PC-3 (cell line): ENCODE measurements at regions of chr12 and their contacts with region 1.

Region 1: GRCh38 chr12:65609359-65609771 is 214.9 kb upstream of the HMGA2 start:
- DNase-seq: peak; percentile 94
- ATAC-seq: peak; percentile 74
- H3K4me3 ChIP-seq: no peak overlapping the region
- H3K27ac ChIP-seq: peak overlapping the region; percentile 96
- H3K4me1 ChIP-seq: peaks cover 74% of the 10 kb centered on the region
- H3K27me3 ChIP-seq: no peaks in the 10 kb centered on the region
- CTCF ChIP-seq: peak; percentile 66

Region 2: GRCh38 chr12:64998371-64999147 is 610.8 kb before region 1 on chr12:
- CTCF ChIA-PET with region 1: no interaction called
- POLR2A ChIA-PET with region 1: no interaction called
- intact Hi-C with region 1: no loop called
- DNase-seq: peak; percentile 93
- ATAC-seq: peak; percentile 90
- H3K4me3 ChIP-seq: no peak overlapping the region
- H3K27ac ChIP-seq: peak overlapping the region; percentile 81
- H3K4me1 ChIP-seq: peaks cover 36% of the 10 kb centered on the region
- H3K27me3 ChIP-seq: no peaks in the 10 kb centered on the region
- CTCF ChIP-seq: no peak

Region 3: GRCh38 chr12:65536876-65537661 is 72.3 kb before region 1 on chr12:
- CTCF ChIA-PET with region 1: no interaction called
- POLR2A ChIA-PET with region 1: interaction called, 11 read pairs
- intact Hi-C with region 1: loop called (anchors 5 kb)
- DNase-seq: peak; percentile 99
- ATAC-seq: peak; percentile 75
- H3K4me3 ChIP-seq: peak overlapping the region; percentile 3; the same call in 1 of the 2 replicates
- H3K27ac ChIP-seq: peak overlapping the region; percentile 89
- H3K4me1 ChIP-seq: peaks cover 58% of the 10 kb centered on the region
- H3K27me3 ChIP-seq: no peaks in the 10 kb centered on the region
- CTCF ChIP-seq: no peak

Region 4: DNA sequence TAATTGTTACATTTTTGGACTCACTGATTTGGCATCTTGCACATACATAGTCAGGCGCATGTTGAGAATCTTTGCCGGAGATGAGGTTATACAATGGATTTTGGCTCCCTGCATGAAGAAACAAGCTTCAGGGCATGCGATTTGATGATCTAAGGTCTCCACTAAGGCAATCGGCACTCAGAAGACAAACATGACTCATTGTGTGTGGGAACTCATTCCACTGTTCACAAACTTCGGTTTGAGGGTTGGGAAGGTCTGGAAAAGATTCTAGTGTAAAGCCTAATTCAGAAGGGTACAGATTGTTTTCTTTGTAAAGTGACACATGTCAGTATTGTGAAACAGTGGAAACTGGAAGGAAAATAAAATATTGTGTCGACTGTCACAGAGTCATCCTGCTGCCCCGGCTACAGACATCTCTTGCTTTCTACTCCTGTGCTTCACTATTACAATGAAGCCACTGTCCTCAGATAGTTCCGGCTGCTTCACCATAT is 22.3 kb after region 1 on chr12:
- CTCF ChIA-PET with region 1: interaction called, 10 read pairs
- POLR2A ChIA-PET with region 1: interaction called, 7 read pairs
- intact Hi-C with region 1: loop called (anchors 1 kb)
- DNase-seq: peak; percentile 99
- ATAC-seq: peak; percentile 49
- H3K4me3 ChIP-seq: no peak overlapping the region; the same call in 1 of the 2 replicates
- H3K27ac ChIP-seq: peak overlapping the region; percentile 99
- H3K4me1 ChIP-seq: peaks cover 65% of the 10 kb centered on the region
- H3K27me3 ChIP-seq: no peaks in the 10 kb centered on the region
- CTCF ChIP-seq: no peak

Region 5: GRCh38 chr12:65649126-65649525 is 39.8 kb after region 1 on chr12:
- CTCF ChIA-PET with region 1: no interaction called
- POLR2A ChIA-PET with region 1: interaction called, 19 read pairs
- intact Hi-C with region 1: loop called (anchors 1 kb)
- DNase-seq: peak; percentile 99
- ATAC-seq: peak; percentile 90
- H3K4me3 ChIP-seq: no peak overlapping the region
- H3K27ac ChIP-seq: peak overlapping the region; percentile 98
- H3K4me1 ChIP-seq: peaks cover 44% of the 10 kb centered on the region
- H3K27me3 ChIP-seq: no peaks in the 10 kb centered on the region
- CTCF ChIP-seq: no peak

Region 6: DNA sequence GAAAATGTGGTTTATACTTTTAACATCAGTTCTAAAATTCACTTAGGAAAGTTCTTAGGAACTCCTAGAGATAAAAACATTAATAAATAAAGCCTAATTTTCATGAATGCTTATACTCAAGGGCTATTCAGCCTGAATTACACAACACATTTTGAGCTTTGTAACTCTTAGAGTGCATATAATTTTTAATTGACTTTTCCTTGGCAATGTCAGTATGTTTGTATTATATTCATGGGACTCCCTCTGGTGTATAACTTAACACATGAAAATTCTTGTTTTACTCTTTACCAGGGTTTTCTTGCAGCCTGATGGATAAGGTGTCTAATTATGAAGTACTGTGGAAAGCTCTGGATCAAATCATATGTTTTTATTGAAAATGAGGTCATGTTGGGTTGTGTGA is 64.4 kb after region 1 on chr12:
- CTCF ChIA-PET with region 1: interaction called, 8 read pairs
- POLR2A ChIA-PET with region 1: no interaction called
- intact Hi-C with region 1: loop called (anchors 1 kb)
- DNase-seq: peak; percentile 32
- ATAC-seq: peak; percentile 50
- H3K4me3 ChIP-seq: no peak overlapping the region
- H3K27ac ChIP-seq: peak overlapping the region; percentile 71
- H3K4me1 ChIP-seq: peaks cover 46% of the 10 kb centered on the region
- H3K27me3 ChIP-seq: no peaks in the 10 kb centered on the region
- CTCF ChIP-seq: peak; percentile 56

Region 7: GRCh38 chr12:65712260-65713004 is 103.1 kb after region 1 on chr12:
- CTCF ChIA-PET with region 1: interaction called, 10 read pairs
- POLR2A ChIA-PET with region 1: no interaction called
- intact Hi-C with region 1: no loop called
- DNase-seq: no peak
- ATAC-seq: no peak
- H3K4me3 ChIP-seq: no peak overlapping the region
- H3K27ac ChIP-seq: no peak overlapping the region
- H3K4me1 ChIP-seq: no peaks in the 10 kb centered on the region
- H3K27me3 ChIP-seq: no peaks in the 10 kb centered on the region
- CTCF ChIP-seq: no peak